ENCODE measurements at regions of chr2 and their contacts with region 1.

Region 1: DNA sequence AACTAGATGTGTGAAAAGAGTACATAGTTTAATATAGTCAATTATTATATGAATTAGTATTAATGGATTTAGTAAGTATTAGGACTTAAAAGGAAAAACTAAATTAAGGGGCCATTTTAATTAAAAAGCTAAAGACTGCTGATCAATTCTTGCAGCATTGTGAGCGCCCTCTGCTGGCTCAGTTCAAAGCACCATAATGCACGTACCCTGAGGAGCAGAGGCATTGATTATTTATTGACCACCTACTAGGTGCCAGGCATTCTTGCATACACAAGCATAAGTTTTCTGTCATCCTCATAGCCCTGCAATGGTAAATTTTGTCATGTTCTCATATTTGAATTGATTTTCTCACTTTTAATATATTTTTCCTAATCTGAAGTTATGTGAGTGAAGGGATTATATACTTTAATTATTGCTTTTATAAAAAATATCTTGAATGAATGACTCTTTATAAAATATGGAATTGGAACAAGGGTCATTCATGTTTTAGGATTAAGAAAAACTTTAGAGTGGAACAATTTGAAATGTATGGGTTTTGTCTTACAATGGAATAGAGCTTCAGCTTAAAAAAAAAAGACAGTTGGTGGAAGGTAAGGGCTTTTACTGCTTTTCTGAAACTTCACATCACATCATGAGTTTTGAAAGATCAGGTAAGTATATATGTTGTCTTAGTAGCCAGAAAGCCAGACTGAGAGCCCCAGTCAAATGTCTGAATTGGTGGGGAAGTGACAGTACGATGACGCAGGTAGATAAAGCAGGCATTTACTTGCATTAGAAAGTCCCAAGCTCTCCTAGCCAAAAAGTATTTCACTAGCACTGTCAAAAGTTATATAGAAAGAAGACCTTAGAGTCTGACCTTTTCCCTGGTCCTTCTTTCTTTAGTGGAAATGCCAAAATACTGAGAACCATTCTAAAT is 9.7 kb downstream of the ITGA4 start:
- DNase-seq: peak; percentile 57
- ATAC-seq: peak; percentile 72
- H3K4me3 ChIP-seq: no peak overlapping the region
- H3K27ac ChIP-seq: no peak overlapping the region
- H3K4me1 ChIP-seq: no peaks in the 10 kb centered on the region
- H3K27me3 ChIP-seq: no peaks in the 10 kb centered on the region
- CTCF ChIP-seq: peak; percentile 53 to 82 (median 77); a peak in 5 of 6 replicates
- POLR2A ChIP-seq: no peak
- RAD21 ChIP-seq: peak; percentile 72

Region 2: DNA sequence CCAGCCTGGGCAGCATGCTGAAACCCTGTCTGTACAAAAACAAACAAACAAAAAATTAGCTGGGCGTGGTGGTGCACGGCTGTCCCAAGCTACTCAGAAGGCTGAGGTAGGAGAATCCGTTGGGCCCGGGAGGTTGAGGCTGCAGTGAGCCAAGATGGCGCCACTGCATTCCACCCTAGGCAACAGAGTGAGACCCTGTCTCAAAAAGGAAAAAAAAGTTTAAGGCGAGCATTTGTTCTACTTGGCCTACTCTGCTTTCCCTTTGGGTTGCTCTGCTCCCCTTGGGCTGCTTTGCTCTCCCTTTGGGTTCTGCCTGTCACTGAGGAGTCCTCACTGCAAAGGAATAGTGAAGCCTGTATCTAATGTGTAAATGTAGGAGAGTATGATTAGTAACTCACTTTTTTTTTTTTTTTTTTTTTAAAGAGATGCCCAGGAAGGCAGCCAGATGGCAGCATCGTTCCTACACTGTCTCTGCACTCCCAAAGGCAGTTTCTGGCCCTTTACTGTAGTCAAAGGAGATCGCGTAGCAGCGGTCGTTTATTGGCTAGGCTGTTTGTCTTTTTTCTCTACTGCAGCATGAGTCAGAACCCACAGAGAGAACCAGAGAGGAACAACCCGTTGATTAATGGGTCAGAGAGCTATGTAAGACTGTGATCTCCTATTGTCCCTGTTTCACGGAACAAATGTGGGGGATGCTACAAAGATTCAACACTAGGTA is 1341.5 kb before region 1 on chr2:
- CTCF ChIA-PET with region 1: interaction called, 3 read pairs
- POLR2A ChIA-PET with region 1: no interaction called
- RAD21 ChIA-PET with region 1: no interaction called
- intact Hi-C with region 1: loop called (anchors 5 kb)
- DNase-seq: peak; percentile 84
- ATAC-seq: peak; percentile 92
- H3K4me3 ChIP-seq: 0 out of 4 replicates have a peak overlapping the region, but pooled peaks of 1 of the 2 experiments have one; percentile 9
- H3K27ac ChIP-seq: no peak overlapping the region
- H3K4me1 ChIP-seq: peaks cover 0 to 14% of the 10 kb centered on the region in 2 experiments; a peak in 2 of 4 replicates
- H3K27me3 ChIP-seq: no peaks in the 10 kb centered on the region
- CTCF ChIP-seq: peak; percentile 65 to 75 (median 72); a peak in 5 of 6 replicates
- POLR2A ChIP-seq: no peak
- RAD21 ChIP-seq: peak; percentile 90

Region 3: GRCh38 chr2:181077128-181077709 is 389.7 kb before region 1 on chr2:
- CTCF ChIA-PET with region 1: no interaction called
- POLR2A ChIA-PET with region 1: no interaction called
- RAD21 ChIA-PET with region 1: no interaction called
- intact Hi-C with region 1: loop called (anchors 1 kb)
- DNase-seq: peak; percentile 22
- ATAC-seq: peak; percentile 84
- H3K4me3 ChIP-seq: no peak overlapping the region
- H3K27ac ChIP-seq: no peak overlapping the region
- H3K4me1 ChIP-seq: no peaks in the 10 kb centered on the region
- H3K27me3 ChIP-seq: no peaks in the 10 kb centered on the region
- CTCF ChIP-seq: peak; percentile 42 to 77 (median 63); a peak in 5 of 6 replicates
- POLR2A ChIP-seq: no peak
- RAD21 ChIP-seq: peak; percentile 73

Region 4: GRCh38 chr2:181104512-181105115 is 362.3 kb before region 1 on chr2:
- CTCF ChIA-PET with region 1: interaction called, 18 read pairs
- POLR2A ChIA-PET with region 1: no interaction called
- RAD21 ChIA-PET with region 1: interaction called in 1 of 2 experiments, 4 read pairs
- intact Hi-C with region 1: loop called (anchors 1 kb)
- DNase-seq: peak; percentile 51
- ATAC-seq: peak; percentile 57
- H3K4me3 ChIP-seq: no peak overlapping the region
- H3K27ac ChIP-seq: no peak overlapping the region
- H3K4me1 ChIP-seq: peaks cover 28 to 47% of the 10 kb centered on the region in 2 experiments
- H3K27me3 ChIP-seq: no peaks in the 10 kb centered on the region
- CTCF ChIP-seq: peak; percentile 70 to 89 (median 82); a peak in 5 of 6 replicates
- POLR2A ChIP-seq: no peak
- RAD21 ChIP-seq: peak; percentile 92

Region 5: DNA sequence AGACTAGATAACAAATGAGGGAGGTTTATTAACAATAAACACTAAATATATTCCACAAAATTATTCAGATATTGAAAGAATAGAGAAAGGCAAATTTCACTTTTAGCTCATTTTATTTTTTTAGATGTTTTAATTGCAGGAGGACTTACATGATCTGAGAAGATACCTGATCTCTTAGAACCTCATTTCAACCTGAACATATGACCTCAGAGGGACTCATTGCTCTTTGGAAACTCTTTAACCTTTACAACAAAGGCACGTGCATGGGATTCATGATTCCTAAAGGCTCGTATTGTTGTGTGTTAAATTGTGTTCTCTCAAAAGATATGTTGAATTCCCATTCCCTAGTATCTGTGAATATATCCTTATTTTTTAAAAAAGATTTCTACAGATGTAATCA is 45.5 kb before region 1 on chr2:
- CTCF ChIA-PET with region 1: no interaction called
- POLR2A ChIA-PET with region 1: no interaction called
- RAD21 ChIA-PET with region 1: no interaction called
- intact Hi-C with region 1: no loop called
- DNase-seq: no peak
- ATAC-seq: no peak
- H3K4me3 ChIP-seq: no peak overlapping the region
- H3K27ac ChIP-seq: no peak overlapping the region
- H3K4me1 ChIP-seq: no peaks in the 10 kb centered on the region
- H3K27me3 ChIP-seq: no peaks in the 10 kb centered on the region
- CTCF ChIP-seq: no peak
- POLR2A ChIP-seq: no peak
- RAD21 ChIP-seq: no peak

Region 6: GRCh38 chr2:182642328-182642727 is 1175.4 kb after region 1 on chr2:
- CTCF ChIA-PET with region 1: no interaction called
- POLR2A ChIA-PET with region 1: no interaction called
- RAD21 ChIA-PET with region 1: no interaction called
- intact Hi-C with region 1: loop called (anchors 10 kb)
- DNase-seq: peak; percentile 63
- ATAC-seq: peak; percentile 99
- H3K4me3 ChIP-seq: no peak overlapping the region
- H3K27ac ChIP-seq: no peak overlapping the region
- H3K4me1 ChIP-seq: 0 out of 4 replicates have a peak, but pooled peaks cover 0 to 5% of the 10 kb centered on the region in 2 experiments
- H3K27me3 ChIP-seq: no peaks in the 10 kb centered on the region
- CTCF ChIP-seq: no peak
- POLR2A ChIP-seq: no peak
- RAD21 ChIP-seq: no peak

Measured in HCT116 (cell line).